ENCODE measurements at regions of chr9 and their contacts with region 1.

Region 1: GRCh38 chr9:83980395-83981125 is at the start of gene RMI1:
- DNase-seq: peak; percentile 99 to 100 (median 100)
- ATAC-seq: peak; percentile 92 to 94 (median 94)
- H3K4me3 ChIP-seq: peak within 1 kb of the TSS; percentile 67 to 98 (median 83)
- H3K27ac ChIP-seq: peak within 1 kb of the TSS; percentile 94 to 100 (median 99)
- H3K4me1 ChIP-seq: peaks cover 0 to 50% (median 31%) of the 10 kb centered on the region in 12 donors
- H3K27me3 ChIP-seq: no peaks in the 10 kb centered on the region
- CTCF ChIP-seq: peak in 5 of 12 donors; percentile 10 to 48 (median 40)
- POLR2A ChIP-seq: peak; percentile 47 to 79
- total RNA-seq, gene RMI1: 2.4 to 9.9 (median 5.9) TPM

Region 2: DNA sequence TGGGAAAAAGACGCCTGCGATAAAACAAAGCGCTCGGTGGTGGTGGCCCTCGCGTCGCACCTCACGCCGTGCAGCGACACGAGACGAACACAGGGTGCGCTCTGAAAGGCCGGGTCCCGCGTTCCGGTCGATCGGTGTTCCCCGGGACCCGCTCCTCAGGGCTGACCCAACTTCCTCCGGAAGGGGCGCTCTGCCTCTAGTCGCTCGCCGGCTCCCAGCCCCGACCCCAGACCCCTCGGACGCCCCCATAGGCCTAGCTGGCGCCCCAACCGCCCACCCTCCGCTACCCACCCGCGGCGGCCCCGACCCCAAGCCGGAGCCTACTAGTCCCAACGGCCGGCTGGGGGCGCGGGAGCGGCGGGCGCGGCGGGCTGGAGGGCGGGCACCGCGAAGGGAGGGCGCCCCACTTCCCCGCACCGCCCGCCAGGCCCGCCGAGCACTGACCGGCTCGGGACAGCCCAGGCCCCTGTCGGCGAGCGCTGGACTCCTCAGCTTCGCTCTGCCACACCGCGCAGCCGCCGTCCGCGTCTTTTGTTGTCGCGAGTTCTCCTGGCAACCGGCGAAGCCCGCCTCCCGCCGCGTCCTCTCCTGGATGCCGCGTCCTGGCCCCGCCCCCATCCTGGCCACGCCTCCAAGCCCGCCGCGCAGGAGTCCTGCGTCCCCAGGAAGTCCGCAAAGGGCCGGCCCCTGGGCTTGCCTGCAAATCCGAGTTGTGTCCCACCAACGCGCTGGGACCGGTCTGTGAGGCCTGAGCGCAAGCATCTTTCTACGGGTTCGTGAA is 59.4 kb before region 1 on chr9 and contains the start of gene KIF27:
- intact Hi-C with region 1: loop called in 3 of 10 experiments (anchors 5 kb)
- DNase-seq: peak; percentile 99 to 100 (median 99)
- ATAC-seq: peak; percentile 98 to 99 (median 99)
- H3K4me3 ChIP-seq: peak within 1 kb of the TSS; percentile 65 to 96 (median 76)
- H3K27ac ChIP-seq: peak within 1 kb of the TSS; percentile 66 to 98 (median 92)
- H3K4me1 ChIP-seq: peaks cover 0 to 12% (median 5%) of the 10 kb centered on the region in 12 donors
- H3K27me3 ChIP-seq: no peaks in the 10 kb centered on the region
- CTCF ChIP-seq: peak in 11 of 12 donors; percentile 21 to 56 (median 37)
- POLR2A ChIP-seq: peak; percentile 26 to 89
- total RNA-seq, gene KIF27: 2.5 to 4.2 (median 3.2) TPM

Region 3: DNA sequence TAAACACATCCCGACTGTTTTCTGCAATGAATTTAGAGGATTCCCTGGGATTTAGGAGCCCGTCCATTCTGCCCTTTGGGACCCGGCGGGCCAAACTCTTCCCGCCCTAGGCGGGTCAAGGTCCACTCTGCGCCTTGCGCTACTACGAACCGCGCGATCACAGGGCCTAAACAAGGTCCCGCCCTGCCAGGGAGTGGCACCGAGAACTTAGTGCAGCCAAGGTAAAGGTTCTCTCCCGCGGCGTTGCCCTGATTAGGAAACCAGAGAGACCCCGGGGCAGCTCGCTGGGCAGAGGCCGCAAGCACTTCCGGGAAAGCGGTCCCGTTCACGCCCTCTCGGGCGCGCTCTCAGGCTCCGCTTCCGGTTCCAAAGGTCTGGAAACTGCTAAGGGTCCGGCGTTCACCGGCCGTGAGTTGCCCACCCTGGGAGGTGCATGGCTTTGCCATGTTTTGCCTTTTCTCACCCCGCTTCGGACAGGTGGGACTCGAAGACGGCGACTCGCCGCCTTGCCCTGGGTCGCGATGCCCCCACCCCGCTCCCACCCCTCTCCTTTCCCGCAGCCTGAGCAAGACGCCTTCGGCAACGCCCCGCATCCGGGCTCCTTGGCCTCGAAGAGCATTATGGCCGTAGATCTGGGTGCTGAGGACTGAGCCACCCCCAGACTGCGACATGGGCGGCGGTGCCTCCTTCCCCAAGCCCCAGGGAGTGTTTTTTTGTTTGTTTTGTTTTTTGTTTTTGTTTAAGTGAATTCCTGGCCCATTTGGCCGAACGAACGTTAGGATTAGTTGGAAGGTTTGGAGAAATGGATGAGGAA is 23.9 kb before region 1 on chr9:
- intact Hi-C with region 1: loop called in 1 of 10 experiments (anchors 1 kb)
- DNase-seq: peak; percentile 78 to 88 (median 84)
- ATAC-seq: peak; percentile 86 to 96 (median 94)
- H3K4me3 ChIP-seq: peak overlapping the region; percentile 35 to 95 (median 72)
- H3K27ac ChIP-seq: peak overlapping the region; percentile 19 to 93 (median 82)
- H3K4me1 ChIP-seq: peaks cover 0 to 21% (median 11%) of the 10 kb centered on the region in 12 donors
- H3K27me3 ChIP-seq: no peaks in the 10 kb centered on the region
- CTCF ChIP-seq: no peak
- POLR2A ChIP-seq: peak in 1 of 2 donors; percentile 14

Region 4: GRCh38 chr9:84061594-84062193 is 81.1 kb after region 1 on chr9:
- intact Hi-C with region 1: loop called in 3 of 10 experiments (anchors 5 kb)
- DNase-seq: peak in 1 of 5 donors; percentile 53
- ATAC-seq: peak; percentile 85 to 93 (median 88)
- H3K4me3 ChIP-seq: no peak overlapping the region
- H3K27ac ChIP-seq: peak overlapping the region in 10 of 12 donors; percentile 26 to 91 (median 58)
- H3K4me1 ChIP-seq: peaks cover 0 to 22% (median 2%) of the 10 kb centered on the region in 12 donors
- H3K27me3 ChIP-seq: no peaks in the 10 kb centered on the region
- CTCF ChIP-seq: no peak
- POLR2A ChIP-seq: no peak

Region 5: DNA sequence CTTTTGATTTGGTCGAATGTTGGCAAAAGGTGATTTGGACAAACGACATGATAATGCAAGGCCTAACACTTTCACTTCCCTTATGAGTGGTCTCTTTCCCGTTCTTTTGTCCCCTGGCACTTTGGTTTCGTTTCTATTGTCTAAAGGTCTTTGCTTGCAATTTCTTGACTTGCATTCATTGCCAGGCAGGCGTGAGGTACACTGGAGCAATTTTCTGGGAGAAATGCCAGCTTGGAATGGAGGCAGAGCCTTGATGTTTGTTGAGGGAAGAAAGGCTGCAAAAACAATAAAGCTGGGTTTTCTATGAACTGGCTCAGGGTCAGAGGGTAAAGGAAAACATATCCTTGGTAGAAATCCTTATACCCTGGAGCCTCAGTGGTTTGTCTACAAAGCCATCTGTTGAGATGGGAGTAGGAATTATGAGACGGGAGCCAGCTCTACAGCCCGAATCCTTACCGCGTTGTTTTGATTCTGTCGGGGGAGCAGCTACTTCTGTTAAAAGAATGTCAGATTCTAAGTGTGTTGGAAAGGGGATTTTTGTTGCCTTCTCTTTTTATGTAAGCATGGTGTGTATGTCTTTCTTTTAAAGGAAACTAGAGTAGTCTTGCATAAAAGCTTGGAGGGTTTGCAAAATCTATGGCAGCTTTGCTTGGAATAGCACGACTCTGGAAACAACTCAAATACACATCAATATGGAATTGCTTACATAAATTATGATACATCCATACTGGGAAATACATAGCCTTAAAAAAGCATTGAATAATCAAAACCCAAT is 158.9 kb after region 1 on chr9:
- intact Hi-C with region 1: loop called in 1 of 10 experiments (anchors 10 kb)
- DNase-seq: peak in 2 of 5 donors; percentile 32 to 39
- ATAC-seq: peak in 3 of 4 donors; percentile 47 to 63 (median 63)
- H3K4me3 ChIP-seq: no peak overlapping the region
- H3K27ac ChIP-seq: no peak overlapping the region
- H3K4me1 ChIP-seq: peaks cover 0 to 28% (median 16%) of the 10 kb centered on the region in 12 donors
- H3K27me3 ChIP-seq: peaks cover 0 to 36% (median 12%) of the 10 kb centered on the region in 9 donors
- CTCF ChIP-seq: no peak
- POLR2A ChIP-seq: no peak

Region 6: DNA sequence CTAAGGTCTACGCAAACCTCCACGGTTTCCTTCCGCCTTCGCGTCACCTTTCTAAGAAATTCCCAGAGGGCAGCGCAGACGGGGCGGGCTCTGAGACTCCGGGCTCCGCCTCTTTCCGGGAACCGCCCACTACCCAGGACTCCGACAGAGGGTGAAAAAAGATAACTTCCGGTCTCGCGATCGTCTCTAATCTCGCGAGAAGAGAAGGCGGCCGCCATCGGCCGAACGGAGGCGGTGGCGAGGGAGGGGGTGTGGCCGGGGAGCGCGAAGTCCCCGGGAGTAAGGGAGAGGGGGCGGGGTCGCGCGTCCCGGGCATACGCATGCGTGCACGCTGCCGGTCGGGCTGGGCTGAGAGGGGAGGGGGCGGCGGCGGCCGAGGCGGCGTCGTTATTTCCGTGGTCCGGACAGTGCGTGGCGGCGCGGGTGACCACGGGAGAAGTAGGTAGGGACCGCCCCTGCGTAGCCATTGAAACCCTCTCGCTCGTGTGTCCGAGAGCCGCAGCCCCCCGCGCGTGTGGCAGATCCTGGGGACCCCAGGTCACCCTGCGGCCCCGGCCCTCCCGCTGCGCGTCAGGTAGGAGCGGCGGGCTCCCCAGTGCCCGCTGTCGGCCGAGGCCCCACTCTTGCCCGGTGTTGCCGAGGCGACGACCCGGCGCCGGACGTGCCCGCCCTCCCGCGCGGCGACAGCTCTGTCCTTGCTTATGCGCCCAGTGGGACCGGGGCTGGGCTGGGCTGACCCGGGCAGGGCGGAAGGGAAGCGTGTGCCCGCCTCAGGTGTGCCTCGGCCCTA is 1960.5 kb after region 1 on chr9 and contains the start of gene NAA35:
- intact Hi-C with region 1: loop called in 1 of 10 experiments (anchors 5 kb)
- DNase-seq: peak; percentile 98 to 99 (median 98)
- ATAC-seq: peak; percentile 97 to 99 (median 98)
- H3K4me3 ChIP-seq: peak within 1 kb of the TSS; percentile 72 to 100 (median 95)
- H3K27ac ChIP-seq: peak within 1 kb of the TSS; percentile 83 to 99 (median 96)
- H3K4me1 ChIP-seq: peaks cover 4 to 39% (median 26%) of the 10 kb centered on the region in 12 donors
- H3K27me3 ChIP-seq: no peaks in the 10 kb centered on the region
- CTCF ChIP-seq: no peak
- POLR2A ChIP-seq: peak in 1 of 2 donors; percentile 40
- total RNA-seq, gene NAA35: 13.1 to 21.8 (median 16.5) TPM